ENCODE measurements at regions of chr6 and their contacts with region 1.

Region 1: GRCh38 chr6:74755778-74756177 is 450.1 kb downstream of the COL12A1 start:
- DNase-seq: no peak
- ATAC-seq: no peak
- H3K4me3 ChIP-seq: no peak overlapping the region
- H3K27ac ChIP-seq: no peak overlapping the region
- H3K4me1 ChIP-seq: peaks cover 12% of the 10 kb centered on the region
- H3K27me3 ChIP-seq: no peaks in the 10 kb centered on the region
- CTCF ChIP-seq: no peak

Region 2: GRCh38 chr6:74606581-74607071 is 149.2 kb before region 1 on chr6:
- CTCF ChIA-PET with region 1: no interaction called
- POLR2A ChIA-PET with region 1: no interaction called
- intact Hi-C with region 1: loop called (anchors 5 kb)
- DNase-seq: peak; percentile 79
- ATAC-seq: peak; percentile 79
- H3K4me3 ChIP-seq: peak overlapping the region; percentile 30; the same call in 1 of the 2 replicates
- H3K27ac ChIP-seq: peak overlapping the region; percentile 73
- H3K4me1 ChIP-seq: peaks cover 57% of the 10 kb centered on the region
- H3K27me3 ChIP-seq: no peaks in the 10 kb centered on the region
- CTCF ChIP-seq: no peak

Region 3: GRCh38 chr6:74826263-74826662 is 70.5 kb after region 1 on chr6:
- CTCF ChIA-PET with region 1: no interaction called
- POLR2A ChIA-PET with region 1: no interaction called
- intact Hi-C with region 1: no loop called
- DNase-seq: no peak
- ATAC-seq: no peak
- H3K4me3 ChIP-seq: no peak overlapping the region
- H3K27ac ChIP-seq: no peak overlapping the region
- H3K4me1 ChIP-seq: no peaks in the 10 kb centered on the region
- H3K27me3 ChIP-seq: no peaks in the 10 kb centered on the region
- CTCF ChIP-seq: no peak

Region 4: DNA sequence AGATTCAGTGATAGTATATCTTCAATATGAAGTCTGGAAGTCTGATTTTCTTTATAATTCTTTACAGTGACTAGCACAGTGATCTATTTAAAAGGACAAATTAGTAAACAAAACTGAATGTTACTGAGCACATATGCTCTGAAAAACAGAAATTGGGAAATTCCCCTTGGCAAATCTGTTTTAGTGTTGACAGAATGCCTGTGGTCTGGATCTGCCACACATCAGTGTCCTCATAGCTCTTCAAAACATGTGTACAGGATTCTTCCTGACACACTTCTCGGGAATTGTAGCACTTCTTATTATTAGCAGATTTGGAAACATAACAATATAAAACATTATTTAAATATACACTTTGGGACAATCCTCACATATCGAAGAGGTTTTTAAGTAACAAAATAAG is 95.8 kb after region 1 on chr6:
- CTCF ChIA-PET with region 1: no interaction called
- POLR2A ChIA-PET with region 1: no interaction called
- intact Hi-C with region 1: no loop called
- DNase-seq: no peak
- ATAC-seq: no peak
- H3K4me3 ChIP-seq: no peak overlapping the region
- H3K27ac ChIP-seq: no peak overlapping the region
- H3K4me1 ChIP-seq: no peaks in the 10 kb centered on the region
- H3K27me3 ChIP-seq: no peaks in the 10 kb centered on the region
- CTCF ChIP-seq: no peak